Esophagus muscularis mucosa (tissue), 4 donors: ENCODE measurements at regions of chr5 and their contacts with region 1.

Region 1: DNA sequence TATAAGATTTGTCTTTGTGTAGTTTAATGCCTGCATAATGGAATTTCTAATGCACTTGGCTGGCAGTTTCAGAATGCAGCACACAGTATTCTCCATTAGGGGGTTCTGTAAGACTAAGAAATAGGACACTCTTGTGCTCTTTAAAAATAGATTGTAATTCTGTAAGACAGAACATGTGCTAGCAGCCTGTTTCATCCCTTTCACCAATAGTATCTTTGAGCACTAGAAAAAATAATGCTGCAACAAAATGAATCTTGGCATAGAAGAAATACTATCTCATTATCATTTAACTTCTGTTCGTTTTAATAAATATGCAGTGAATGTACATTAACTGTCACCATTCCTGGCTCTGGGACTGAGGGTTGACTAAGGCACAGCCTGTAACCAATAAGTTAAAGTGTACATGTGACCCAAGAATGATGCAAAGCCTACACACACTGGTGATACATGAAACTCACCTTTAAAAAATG is 23.8 kb upstream of the ZNF622 start:
- DNase-seq: no peak
- H3K4me3 ChIP-seq: no peak overlapping the region
- H3K27ac ChIP-seq: no peak overlapping the region
- H3K4me1 ChIP-seq: peaks cover 7 to 21% (median 11%) of the 10 kb centered on the region in 4 donors
- H3K27me3 ChIP-seq: no peaks in the 10 kb centered on the region
- CTCF ChIP-seq: peak; percentile 54 to 72 (median 62)
- EP300 ChIP-seq: no peak
- POLR2A ChIP-seq: no peak

Region 2: GRCh38 chr5:16326137-16326536 is 163.2 kb before region 1 on chr5:
- intact Hi-C with region 1: no loop called
- DNase-seq: no peak
- H3K4me3 ChIP-seq: no peak overlapping the region
- H3K27ac ChIP-seq: no peak overlapping the region
- H3K4me1 ChIP-seq: no peaks in the 10 kb centered on the region
- H3K27me3 ChIP-seq: no peaks in the 10 kb centered on the region
- CTCF ChIP-seq: no peak
- EP300 ChIP-seq: no peak
- POLR2A ChIP-seq: no peak

Region 3: GRCh38 chr5:16552666-16553343 is 63.4 kb after region 1 on chr5:
- intact Hi-C with region 1: loop called (anchors 5 kb)
- DNase-seq: no peak
- H3K4me3 ChIP-seq: no peak overlapping the region
- H3K27ac ChIP-seq: no peak overlapping the region
- H3K4me1 ChIP-seq: peaks cover 6 to 18% (median 10%) of the 10 kb centered on the region in 4 donors
- H3K27me3 ChIP-seq: no peaks in the 10 kb centered on the region
- CTCF ChIP-seq: peak; percentile 54 to 75 (median 57)
- EP300 ChIP-seq: no peak
- POLR2A ChIP-seq: no peak

Region 4: GRCh38 chr5:16666883-16667398 is 177.6 kb after region 1 on chr5:
- intact Hi-C with region 1: loop called (anchors 10 kb)
- DNase-seq: peak; percentile 84
- H3K4me3 ChIP-seq: no peak overlapping the region
- H3K27ac ChIP-seq: no peak overlapping the region
- H3K4me1 ChIP-seq: peaks cover 0 to 6% (median 5%) of the 10 kb centered on the region in 4 donors
- H3K27me3 ChIP-seq: no peaks in the 10 kb centered on the region
- CTCF ChIP-seq: peak in 2 of 3 experiments; percentile 14 to 24
- EP300 ChIP-seq: no peak
- POLR2A ChIP-seq: no peak